ENCODE measurements at regions of chr1 and their contacts with region 1.

Region 1: GRCh38 chr1:52127181-52128180 is 14.4 kb upstream of the ZFYVE9 start:
- DNase-seq: no peak

Region 2: GRCh38 chr1:52296345-52296744 is 168.9 kb after region 1 on chr1:
- intact Hi-C with region 1: loop called (anchors 5 kb)
- DNase-seq: no peak

Region 3: GRCh38 chr1:52404116-52404986 is 276.9 kb after region 1 on chr1 and contains the starts of genes ORC1 and PRPF38A:
- intact Hi-C with region 1: loop called in 1 of 2 experiments (anchors 5 kb)
- DNase-seq: peak; percentile 99
- total RNA-seq, gene ORC1: 0.46 to 0.52 TPM
- total RNA-seq, gene PRPF38A: 29.6 to 31.6 TPM